ENCODE measurements at regions of chr2 and their contacts with region 1.

Region 1: GRCh38 chr2:174748948-174749347 is 15.3 kb downstream of the CHRNA1 start:
- DNase-seq: peak; percentile 87
- H3K4me3 Mint-ChIP-seq: no peak overlapping the region
- H3K27ac Mint-ChIP-seq: no peak overlapping the region
- H3K4me1 Mint-ChIP-seq: peaks cover 34% of the 10 kb centered on the region
- H3K27me3 Mint-ChIP-seq: no peaks in the 10 kb centered on the region

Region 2: DNA sequence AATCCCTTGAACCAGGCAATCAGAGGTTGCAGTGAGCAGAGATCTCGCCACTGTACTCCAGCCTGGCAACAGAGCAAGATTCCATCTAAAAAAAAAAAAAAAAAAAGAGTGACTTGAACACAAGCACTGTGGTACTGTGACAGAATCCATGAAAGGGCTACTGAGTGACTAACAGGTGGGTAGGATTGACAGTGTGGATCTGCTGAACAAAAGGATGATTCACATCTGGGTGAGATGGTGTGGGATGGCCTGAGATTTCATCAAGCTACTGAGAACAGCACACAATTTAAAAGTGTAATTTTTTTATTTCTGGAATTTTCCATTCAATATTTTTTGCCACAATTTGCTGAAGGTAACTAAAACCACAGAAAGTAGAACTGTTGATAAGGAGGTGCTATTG is 770.5 kb before region 1 on chr2:
- CTCF ChIA-PET with region 1: no interaction called
- intact Hi-C with region 1: no loop called
- DNase-seq: peak; percentile 34
- H3K4me3 Mint-ChIP-seq: no peak overlapping the region
- H3K27ac Mint-ChIP-seq: peak overlapping the region; percentile 8
- H3K4me1 Mint-ChIP-seq: peaks cover 15% of the 10 kb centered on the region
- H3K27me3 Mint-ChIP-seq: no peaks in the 10 kb centered on the region

Region 3: DNA sequence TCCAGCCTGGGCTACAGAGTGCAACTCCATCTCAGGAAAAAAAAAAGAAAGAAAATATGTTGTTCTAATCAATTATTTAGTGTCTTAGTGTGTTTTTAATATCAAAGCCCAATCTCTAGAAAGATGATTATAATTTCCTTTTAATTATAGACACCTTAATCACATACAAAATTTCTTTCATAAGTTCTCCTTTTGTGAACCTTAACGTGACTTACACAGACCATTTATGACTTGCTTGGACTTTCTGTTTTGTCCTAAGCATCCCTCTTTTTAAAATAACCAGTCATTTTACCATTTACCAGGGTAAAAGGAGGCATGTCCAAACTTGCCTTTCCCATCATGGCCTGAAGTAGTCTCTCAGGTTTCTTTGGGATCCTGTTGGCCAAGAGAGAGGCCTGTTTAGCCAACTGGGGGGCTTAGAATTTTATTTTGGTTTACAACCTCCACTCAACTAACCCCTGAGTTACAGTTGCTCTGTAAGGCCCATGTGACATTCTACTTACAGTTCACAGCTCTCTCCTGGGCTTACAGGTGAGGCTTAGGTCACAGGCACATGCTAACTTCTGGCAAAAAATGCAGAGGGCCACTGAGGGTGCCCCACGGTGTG is 238.3 kb before region 1 on chr2:
- CTCF ChIA-PET with region 1: no interaction called
- intact Hi-C with region 1: no loop called
- DNase-seq: no peak
- H3K4me3 Mint-ChIP-seq: no peak overlapping the region
- H3K27ac Mint-ChIP-seq: no peak overlapping the region
- H3K4me1 Mint-ChIP-seq: peaks cover 15% of the 10 kb centered on the region
- H3K27me3 Mint-ChIP-seq: no peaks in the 10 kb centered on the region

Region 4: DNA sequence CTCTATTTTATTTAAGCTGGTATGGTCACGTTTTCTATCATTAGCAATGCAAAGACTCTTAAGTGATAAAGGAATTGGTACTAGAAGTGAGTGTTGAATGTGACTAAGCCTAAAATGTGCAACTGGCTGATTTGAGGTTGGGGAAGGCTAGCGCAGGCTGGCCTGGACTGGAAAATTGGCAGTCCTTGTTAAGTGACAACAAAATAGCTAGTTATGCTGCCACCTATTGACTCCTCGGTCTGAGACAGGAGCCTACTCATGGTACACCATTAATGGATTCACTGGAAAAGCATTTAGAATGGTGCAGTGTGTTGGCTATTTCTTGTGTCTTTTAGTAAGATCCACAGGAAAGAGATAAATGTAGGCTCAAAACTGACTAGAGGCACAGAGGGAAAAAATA is 145.7 kb before region 1 on chr2:
- CTCF ChIA-PET with region 1: no interaction called
- intact Hi-C with region 1: loop called (anchors 2 kb)
- DNase-seq: peak; percentile 85
- H3K4me3 Mint-ChIP-seq: no peak overlapping the region
- H3K27ac Mint-ChIP-seq: peak overlapping the region; percentile 76
- H3K4me1 Mint-ChIP-seq: peaks cover 81% of the 10 kb centered on the region
- H3K27me3 Mint-ChIP-seq: no peaks in the 10 kb centered on the region

Region 5: GRCh38 chr2:174764280-174765255 is 15.6 kb after region 1 on chr2 and contains the start of gene CHRNA1:
- CTCF ChIA-PET with region 1: interaction called, 26 read pairs
- intact Hi-C with region 1: no loop called
- DNase-seq: no peak
- H3K4me3 Mint-ChIP-seq: no peak within 1 kb of the TSS
- H3K27ac Mint-ChIP-seq: no peak within 1 kb of the TSS
- H3K4me1 Mint-ChIP-seq: peaks cover 8% of the 10 kb centered on the region
- H3K27me3 Mint-ChIP-seq: no peaks in the 10 kb centered on the region
- total RNA-seq, gene CHRNA1: not detected

Region 6: GRCh38 chr2:174794851-174795374 is 46.0 kb after region 1 on chr2:
- CTCF ChIA-PET with region 1: interaction called, 8 read pairs
- intact Hi-C with region 1: loop called (anchors 1 kb)
- DNase-seq: peak; percentile 34
- H3K4me3 Mint-ChIP-seq: no peak overlapping the region
- H3K27ac Mint-ChIP-seq: no peak overlapping the region
- H3K4me1 Mint-ChIP-seq: peaks cover 19% of the 10 kb centered on the region
- H3K27me3 Mint-ChIP-seq: peaks cover 4% of the 10 kb centered on the region

Region 7: GRCh38 chr2:174985630-174986029 is 236.7 kb after region 1 on chr2:
- CTCF ChIA-PET with region 1: interaction called, 33 read pairs
- intact Hi-C with region 1: loop called (anchors 1 kb)
- DNase-seq: no peak
- H3K4me3 Mint-ChIP-seq: no peak overlapping the region
- H3K27ac Mint-ChIP-seq: no peak overlapping the region
- H3K4me1 Mint-ChIP-seq: peaks cover 2% of the 10 kb centered on the region
- H3K27me3 Mint-ChIP-seq: no peaks in the 10 kb centered on the region

Region 8: GRCh38 chr2:175181104-175181876 is 432.3 kb after region 1 on chr2 and contains the start of gene ATP5MC3:
- CTCF ChIA-PET with region 1: no interaction called
- intact Hi-C with region 1: loop called (anchors 5 kb)
- DNase-seq: peak; percentile 95
- H3K4me3 Mint-ChIP-seq: peak within 1 kb of the TSS; percentile 94
- H3K27ac Mint-ChIP-seq: peak within 1 kb of the TSS; percentile 85
- H3K4me1 Mint-ChIP-seq: peaks cover 29% of the 10 kb centered on the region
- H3K27me3 Mint-ChIP-seq: no peaks in the 10 kb centered on the region
- total RNA-seq, gene ATP5MC3: 308 to 310 TPM